Posterior vena cava (tissue), 2 donors: ENCODE measurements at regions of chr5 and their contacts with region 1.

Region 1: GRCh38 chr5:108748401-108749127 is 867 bp downstream of the FER start:
- DNase-seq: peak; percentile 100

Region 2: GRCh38 chr5:108788142-108788541 is 39.6 kb after region 1 on chr5:
- intact Hi-C with region 1: no loop called
- DNase-seq: no peak

Region 3: DNA sequence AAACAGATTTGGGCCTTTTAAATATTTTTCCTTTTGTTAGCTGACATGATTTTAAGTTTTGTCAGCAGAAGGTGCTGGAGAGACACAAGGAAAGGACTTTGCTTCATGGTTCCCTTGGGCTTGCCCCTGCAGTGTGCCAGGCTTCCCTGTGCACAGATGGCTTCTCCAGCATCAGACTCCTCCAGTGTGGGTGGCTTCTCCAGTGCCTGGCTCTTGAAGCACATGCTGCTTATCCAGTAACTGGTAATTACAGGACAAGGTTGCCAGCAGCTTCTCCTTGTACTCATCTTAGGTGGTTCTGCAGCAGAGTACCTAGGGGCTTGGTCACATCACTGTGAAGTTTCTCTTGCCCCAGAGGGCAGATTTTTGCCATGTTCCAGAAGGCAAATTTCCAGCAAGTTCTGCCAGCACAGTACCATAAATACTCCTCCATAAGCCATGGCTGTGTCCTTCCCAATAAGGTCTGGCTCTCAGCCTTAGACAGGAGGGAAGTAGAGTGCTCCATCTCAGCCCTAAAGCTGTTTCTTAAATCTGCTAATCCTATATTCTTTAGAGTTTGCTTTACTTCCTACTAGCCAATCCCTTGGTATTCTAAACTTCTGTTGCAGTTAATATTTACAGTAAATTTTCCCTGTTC is 598.8 kb after region 1 on chr5:
- intact Hi-C with region 1: loop called in 1 of 2 experiments (anchors 5 kb)
- DNase-seq: no peak

Region 4: DNA sequence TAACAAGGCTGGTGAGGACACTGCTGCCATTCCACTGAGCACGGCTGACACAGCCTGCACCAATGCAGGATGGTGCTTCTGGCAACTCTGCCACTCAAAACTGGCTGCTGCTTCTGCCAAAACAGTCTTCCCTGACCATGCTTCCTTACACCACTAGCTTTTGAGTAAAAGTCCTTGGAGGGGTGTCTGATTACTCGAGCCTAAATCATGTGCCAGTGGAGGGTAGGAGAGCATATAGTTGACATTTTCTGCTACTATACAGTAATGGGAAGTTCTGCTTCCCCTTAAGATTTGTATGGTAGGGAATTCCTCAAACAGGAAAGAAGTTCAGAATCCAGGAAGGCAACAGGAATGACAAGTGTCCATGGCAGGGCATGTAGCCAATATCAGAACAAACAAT is 673.4 kb after region 1 on chr5:
- intact Hi-C with region 1: loop called in 1 of 2 experiments (anchors 10 kb)
- DNase-seq: no peak